ENCODE measurements at regions of chr20 and their contacts with region 1.

Region 1: GRCh38 chr20:17682103-17682888 is at the start of gene RRBP1:
- DNase-seq: peak; percentile 98
- ATAC-seq: peak; percentile 90
- H3K4me3 ChIP-seq: peak within 1 kb of the TSS; percentile 87 to 92 (median 92)
- H3K27ac ChIP-seq: peak within 1 kb of the TSS; percentile 87
- H3K4me1 ChIP-seq: peaks cover 59% of the 10 kb centered on the region
- H3K27me3 ChIP-seq: peaks cover 0 to 18% of the 10 kb centered on the region in 2 experiments; a peak in 4 of 5 replicates
- CTCF ChIP-seq: peak; percentile 89
- EP300 ChIP-seq: peak; percentile 51 to 93
- POLR2A ChIP-seq: peak; percentile 98 to 99
- RAD21 ChIP-seq: peak; percentile 92
- total RNA-seq, gene RRBP1: 97.1 and 222 TPM in 2 replicates

Region 2: DNA sequence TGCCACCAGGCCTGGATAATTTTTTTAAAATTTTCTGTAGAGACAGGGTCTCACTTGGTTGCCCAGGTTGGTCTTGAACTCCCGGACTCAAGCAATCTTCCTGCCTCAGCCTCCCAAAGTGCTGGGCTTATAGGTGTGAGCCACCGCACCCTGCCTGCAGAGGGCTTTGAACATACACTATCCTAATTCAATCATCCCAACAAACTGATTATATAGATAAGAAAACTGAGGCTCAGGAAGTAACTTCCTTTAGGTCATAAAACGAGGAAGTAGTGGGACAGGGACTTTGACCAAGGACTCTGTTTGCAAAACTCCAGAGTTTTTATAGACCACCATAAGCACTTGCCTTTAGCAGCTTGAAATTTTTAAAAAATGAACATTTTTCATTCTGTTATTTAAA is 12.5 kb after region 1 on chr20:
- CTCF ChIA-PET with region 1: no interaction called
- POLR2A ChIA-PET with region 1: interaction called, 10 read pairs
- in situ Hi-C with region 1: no loop called
- intact Hi-C with region 1: no loop called
- DNase-seq: no peak
- ATAC-seq: no peak
- H3K4me3 ChIP-seq: no peak overlapping the region
- H3K27ac ChIP-seq: no peak overlapping the region
- H3K4me1 ChIP-seq: peaks cover 8% of the 10 kb centered on the region
- H3K27me3 ChIP-seq: peaks cover 6 to 54% of the 10 kb centered on the region in 2 experiments; a peak in 4 of 5 replicates
- CTCF ChIP-seq: no peak
- EP300 ChIP-seq: no peak
- POLR2A ChIP-seq: no peak
- RAD21 ChIP-seq: no peak

Region 3: DNA sequence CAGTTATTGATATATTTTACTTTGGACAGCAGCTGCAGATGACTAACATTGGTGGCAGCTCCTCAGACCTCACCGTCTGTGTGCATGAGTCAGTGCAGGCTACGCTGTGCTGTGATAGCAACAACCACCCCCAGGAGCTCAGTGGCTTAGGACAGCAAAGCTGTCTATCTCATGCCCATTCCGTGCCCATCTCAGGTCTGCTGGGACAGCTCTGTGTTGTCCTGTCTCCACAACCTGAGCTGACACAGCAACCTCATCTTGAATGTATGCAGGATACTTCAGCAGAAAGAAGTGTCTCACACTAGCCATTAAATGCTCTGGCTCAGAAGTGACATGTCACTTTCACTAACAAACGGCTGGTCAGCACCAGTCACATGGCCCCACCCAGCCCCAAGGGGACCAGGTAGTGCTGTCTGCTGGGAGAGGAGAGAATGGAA is 65.2 kb after region 1 on chr20:
- CTCF ChIA-PET with region 1: no interaction called
- POLR2A ChIA-PET with region 1: interaction called, 17 read pairs
- in situ Hi-C with region 1: no loop called
- intact Hi-C with region 1: no loop called
- DNase-seq: peak; percentile 34
- ATAC-seq: peak; percentile 82
- H3K4me3 ChIP-seq: no peak overlapping the region
- H3K27ac ChIP-seq: no peak overlapping the region
- H3K4me1 ChIP-seq: peaks cover 54% of the 10 kb centered on the region
- H3K27me3 ChIP-seq: peaks cover 1 to 24% of the 10 kb centered on the region in 2 experiments; a peak in 3 of 5 replicates
- CTCF ChIP-seq: no peak
- EP300 ChIP-seq: no peak
- POLR2A ChIP-seq: no peak
- RAD21 ChIP-seq: no peak

Region 4: DNA sequence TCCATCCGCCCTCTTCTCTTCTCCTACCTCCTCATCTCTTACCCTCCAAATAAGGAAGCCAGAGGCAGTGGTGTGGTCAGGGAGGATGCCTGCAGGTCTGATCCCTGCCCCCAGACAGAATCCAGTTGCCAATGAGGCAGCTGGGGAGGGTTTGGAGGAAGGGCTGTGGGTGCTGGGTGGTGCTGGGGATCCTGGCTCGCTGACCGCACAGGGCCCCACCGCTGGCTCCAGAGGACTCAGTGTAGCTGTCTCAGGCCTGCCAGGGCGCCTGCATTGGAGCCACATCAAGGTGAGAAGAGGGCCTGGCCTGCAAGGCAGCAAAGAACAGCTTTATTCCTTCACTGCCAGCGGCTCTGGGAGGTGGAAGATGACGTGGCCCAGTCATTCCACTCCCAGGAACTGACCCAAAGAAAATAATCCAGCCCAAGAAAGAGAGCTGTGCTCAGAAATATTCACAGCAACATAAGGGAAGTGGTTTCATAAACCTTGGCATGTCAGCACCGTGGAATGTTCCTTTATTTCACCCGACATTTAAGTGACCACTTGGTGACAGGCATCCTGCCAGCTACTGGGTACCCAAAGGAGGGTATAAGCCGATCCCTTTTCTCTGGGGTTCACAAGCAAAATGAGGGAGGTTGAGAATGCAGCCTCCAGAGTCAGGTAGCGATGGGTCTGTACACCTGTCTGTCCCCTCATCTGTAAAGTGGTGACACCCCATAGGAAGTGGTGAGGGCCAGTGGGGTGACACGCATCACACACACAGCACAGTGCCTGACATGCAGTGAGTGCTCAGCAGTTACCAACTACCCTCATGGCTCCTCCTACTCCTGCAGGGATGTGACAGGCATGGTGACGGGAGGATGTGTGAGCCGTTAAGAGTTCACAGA is 161.2 kb after region 1 on chr20:
- CTCF ChIA-PET with region 1: no interaction called
- POLR2A ChIA-PET with region 1: interaction called, 15 read pairs
- in situ Hi-C with region 1: no loop called
- intact Hi-C with region 1: no loop called
- DNase-seq: no peak
- ATAC-seq: peak; percentile 69
- H3K4me3 ChIP-seq: peak overlapping the region in 1 of 3 experiments; percentile 42; a peak in 1 of 6 replicates
- H3K27ac ChIP-seq: no peak overlapping the region
- H3K4me1 ChIP-seq: peaks cover 71% of the 10 kb centered on the region
- H3K27me3 ChIP-seq: peaks cover 8 to 21% of the 10 kb centered on the region in 2 experiments; a peak in 3 of 5 replicates
- CTCF ChIP-seq: no peak
- EP300 ChIP-seq: no peak
- POLR2A ChIP-seq: no peak
- RAD21 ChIP-seq: no peak

Region 5: DNA sequence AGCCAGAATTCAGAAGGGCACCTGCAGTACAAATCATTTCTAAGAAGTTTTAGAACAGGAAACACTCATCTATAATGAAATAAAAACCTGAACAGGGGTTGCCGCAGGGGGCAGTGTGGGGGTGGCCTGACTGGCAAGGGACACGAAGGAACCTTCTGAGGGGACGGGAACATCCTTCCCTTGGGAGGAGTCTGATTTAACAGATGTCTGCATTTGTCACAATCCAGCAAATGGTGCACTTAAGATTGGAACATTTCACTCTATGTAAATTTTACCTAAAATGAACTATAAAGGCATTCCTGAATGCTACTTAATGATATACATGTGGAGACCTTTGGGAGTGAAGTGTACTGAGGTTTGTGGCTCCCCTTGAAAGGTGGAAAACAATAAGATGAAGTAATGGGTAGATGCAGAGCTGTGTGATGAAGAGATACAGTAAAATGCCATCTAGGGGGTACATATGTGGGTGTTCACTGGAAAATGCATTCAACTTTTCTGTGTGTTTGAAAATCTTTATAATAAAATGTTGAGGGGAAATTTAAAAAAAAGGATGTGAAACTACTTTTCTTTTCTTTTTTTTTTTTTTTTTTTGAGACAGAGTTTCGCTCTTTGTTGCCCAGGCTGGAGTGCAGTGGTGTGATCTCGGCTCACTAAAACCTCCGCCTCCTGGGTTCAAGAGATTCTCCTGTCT is 196.8 kb after region 1 on chr20:
- CTCF ChIA-PET with region 1: no interaction called
- POLR2A ChIA-PET with region 1: interaction called, 117 read pairs
- in situ Hi-C with region 1: loop called (anchors 5 kb)
- intact Hi-C with region 1: loop called (anchors 1 kb)
- DNase-seq: no peak
- ATAC-seq: no peak
- H3K4me3 ChIP-seq: peak overlapping the region; percentile 30 to 61 (median 44)
- H3K27ac ChIP-seq: peak overlapping the region; percentile 78
- H3K4me1 ChIP-seq: peaks cover 98% of the 10 kb centered on the region
- H3K27me3 ChIP-seq: no peaks in the 10 kb centered on the region
- CTCF ChIP-seq: no peak
- EP300 ChIP-seq: no peak
- POLR2A ChIP-seq: no peak
- RAD21 ChIP-seq: no peak

Region 6: DNA sequence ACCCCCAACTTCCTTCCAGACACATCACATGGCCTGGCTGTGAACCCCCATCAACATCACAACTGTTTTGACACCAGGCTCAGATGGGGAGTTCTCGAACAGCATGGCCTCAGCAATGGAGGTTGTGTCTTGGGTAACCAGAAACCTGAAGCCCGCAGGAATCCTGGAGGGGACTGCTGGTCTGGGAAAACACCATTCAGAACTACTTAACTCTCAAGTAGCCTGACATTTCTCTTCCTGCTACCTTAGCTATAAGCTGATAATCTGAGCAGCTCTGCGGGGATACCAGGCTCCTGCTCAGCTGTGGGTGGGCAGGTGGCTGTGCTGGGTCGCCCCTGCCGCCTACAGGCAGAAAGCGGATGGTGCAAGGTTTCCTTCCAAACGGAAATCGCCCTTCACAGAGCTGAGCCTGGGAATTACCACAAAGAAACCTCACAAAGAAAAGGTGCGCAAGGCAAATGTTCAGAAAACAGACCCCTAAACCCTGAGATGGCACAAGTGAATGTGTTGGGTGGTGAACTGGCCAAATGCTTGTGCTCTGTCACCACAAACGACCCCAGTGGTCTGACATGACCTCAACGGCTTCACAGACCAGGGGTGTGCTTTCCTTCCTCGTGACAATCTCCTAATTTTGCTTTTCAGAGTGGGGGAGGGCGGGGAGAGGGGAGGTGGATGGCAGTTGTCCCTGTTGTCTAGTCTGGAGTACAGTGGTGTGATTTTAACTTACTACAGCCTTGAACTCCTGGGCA is 256.7 kb after region 1 on chr20:
- CTCF ChIA-PET with region 1: interaction called, 5 read pairs
- POLR2A ChIA-PET with region 1: interaction called, 21 read pairs
- in situ Hi-C with region 1: no loop called
- intact Hi-C with region 1: loop called (anchors 1 kb)
- DNase-seq: peak; percentile 76
- ATAC-seq: peak; percentile 76
- H3K4me3 ChIP-seq: peak overlapping the region; percentile 5 to 62 (median 32); a peak in 3 of 6 replicates
- H3K27ac ChIP-seq: peak overlapping the region; percentile 43
- H3K4me1 ChIP-seq: peaks cover 47% of the 10 kb centered on the region
- H3K27me3 ChIP-seq: peaks cover 6 to 22% of the 10 kb centered on the region in 2 experiments; a peak in 4 of 5 replicates
- CTCF ChIP-seq: peak; percentile 99
- EP300 ChIP-seq: no peak
- POLR2A ChIP-seq: peak in 1 of 2 experiments; percentile 44; a peak in 2 of 4 replicates
- RAD21 ChIP-seq: peak; percentile 99